B cell (primary cell): ENCODE measurements at regions of chr1 and their contacts with region 1.

Region 1: DNA sequence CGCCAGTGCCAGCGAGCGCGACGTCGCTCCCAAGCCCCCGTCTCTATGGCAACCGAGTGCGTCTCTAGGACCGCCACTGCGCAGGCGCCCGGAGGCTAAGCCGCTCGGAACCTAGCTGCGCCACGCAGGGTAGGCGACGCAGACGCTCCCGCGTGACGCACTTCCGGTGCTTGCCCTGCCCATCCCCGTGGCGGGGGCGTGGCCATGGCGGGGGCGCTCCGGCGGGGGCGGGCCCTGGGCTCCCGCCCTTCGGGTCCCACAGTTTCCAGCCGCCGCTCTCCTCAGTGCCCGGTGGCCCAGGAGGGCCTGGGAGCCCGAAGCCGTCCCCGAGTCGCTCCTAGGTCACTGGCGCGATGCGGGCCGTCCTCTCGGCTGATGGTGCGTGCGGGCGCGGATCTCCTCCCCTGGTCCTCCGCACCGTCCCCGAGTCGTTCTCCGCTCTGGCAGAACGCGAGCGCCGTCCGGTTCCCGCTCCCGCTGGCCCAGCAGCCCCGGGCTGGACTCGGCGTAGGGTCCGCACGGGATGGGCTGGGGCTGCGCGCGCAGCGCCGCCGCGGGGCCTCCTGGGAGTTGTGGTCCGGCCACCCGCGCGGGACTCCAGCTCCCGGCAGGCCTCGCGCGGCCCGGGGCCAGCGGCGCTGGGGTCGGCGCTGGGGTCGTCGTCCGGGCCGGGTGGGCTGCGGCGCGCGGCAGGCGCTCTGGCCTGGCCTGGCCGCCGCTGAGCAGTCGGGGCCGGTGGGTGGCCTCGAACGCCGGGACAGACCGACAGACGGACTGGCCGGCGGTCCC is at the start of gene MIB2:
- DNase-seq: peak; percentile 98
- ATAC-seq: peak; percentile 90
- H3K4me3 ChIP-seq: peak within 1 kb of the TSS; percentile 36 to 98 (median 97)
- H3K4me3 Mint-ChIP-seq: peak within 1 kb of the TSS; percentile 89
- H3K27ac ChIP-seq: peak within 1 kb of the TSS; percentile 100
- H3K27ac Mint-ChIP-seq: peak within 1 kb of the TSS; percentile 92
- H3K4me1 ChIP-seq: peaks cover 20% of the 10 kb centered on the region in 2 donors
- H3K4me1 Mint-ChIP-seq: peaks cover 26% of the 10 kb centered on the region
- H3K27me3 ChIP-seq: no peaks in the 10 kb centered on the region
- H3K27me3 Mint-ChIP-seq: no peaks in the 10 kb centered on the region
- CTCF ChIP-seq: no peak
- total RNA-seq, gene MIB2: 95.9 and 98.1 TPM in 2 replicates

Region 2: GRCh38 chr1:1374929-1375662 is 240.4 kb before region 1 on chr1 and contains the start of gene AURKAIP1:
- CTCF ChIA-PET with region 1: no interaction called
- POLR2A ChIA-PET with region 1: no interaction called
- intact Hi-C with region 1: loop called (anchors 1 kb)
- DNase-seq: peak; percentile 100
- ATAC-seq: peak; percentile 89
- H3K4me3 ChIP-seq: peak within 1 kb of the TSS; percentile 61 to 93 (median 78)
- H3K4me3 Mint-ChIP-seq: peak within 1 kb of the TSS; percentile 84
- H3K27ac ChIP-seq: peak within 1 kb of the TSS; percentile 75 to 95
- H3K27ac Mint-ChIP-seq: peak within 1 kb of the TSS; percentile 89
- H3K4me1 ChIP-seq: peaks cover 19 to 37% of the 10 kb centered on the region in 2 donors
- H3K4me1 Mint-ChIP-seq: peaks cover 11% of the 10 kb centered on the region
- H3K27me3 ChIP-seq: no peaks in the 10 kb centered on the region
- H3K27me3 Mint-ChIP-seq: no peaks in the 10 kb centered on the region
- CTCF ChIP-seq: peak; percentile 39
- total RNA-seq, gene AURKAIP1: 61.7 and 67.0 TPM in 2 replicates

Region 3: GRCh38 chr1:1511533-1512285 is 103.7 kb before region 1 on chr1 and contains the start of gene ATAD3A:
- CTCF ChIA-PET with region 1: no interaction called
- POLR2A ChIA-PET with region 1: no interaction called
- intact Hi-C with region 1: loop called (anchors 1 kb)
- DNase-seq: peak; percentile 97
- ATAC-seq: peak; percentile 94
- H3K4me3 ChIP-seq: peak within 1 kb of the TSS; percentile 47 to 92 (median 87)
- H3K4me3 Mint-ChIP-seq: peak within 1 kb of the TSS; percentile 95
- H3K27ac ChIP-seq: peak within 1 kb of the TSS; percentile 90 to 94
- H3K27ac Mint-ChIP-seq: peak within 1 kb of the TSS; percentile 94
- H3K4me1 ChIP-seq: peaks cover 6 to 10% of the 10 kb centered on the region in 2 donors
- H3K4me1 Mint-ChIP-seq: peaks cover 13% of the 10 kb centered on the region
- H3K27me3 ChIP-seq: no peaks in the 10 kb centered on the region
- H3K27me3 Mint-ChIP-seq: no peaks in the 10 kb centered on the region
- CTCF ChIP-seq: no peak
- total RNA-seq, gene ATAD3A: 17.5 and 22.9 TPM in 2 replicates

Region 4: GRCh38 chr1:1603671-1604373 is 11.6 kb before region 1 on chr1:
- CTCF ChIA-PET with region 1: interaction called, 3 read pairs
- POLR2A ChIA-PET with region 1: interaction called, 10 read pairs
- intact Hi-C with region 1: no loop called
- DNase-seq: peak; percentile 10
- ATAC-seq: no peak
- H3K4me3 ChIP-seq: no peak overlapping the region
- H3K4me3 Mint-ChIP-seq: no peak overlapping the region
- H3K27ac ChIP-seq: no peak overlapping the region
- H3K27ac Mint-ChIP-seq: no peak overlapping the region
- H3K4me1 ChIP-seq: peaks cover 27 to 37% of the 10 kb centered on the region in 2 donors
- H3K4me1 Mint-ChIP-seq: peaks cover 31% of the 10 kb centered on the region
- H3K27me3 ChIP-seq: peaks cover 0 to 17% (median 3%) of the 10 kb centered on the region in 4 experiments
- H3K27me3 Mint-ChIP-seq: peaks cover 3% of the 10 kb centered on the region
- CTCF ChIP-seq: no peak

Region 5: GRCh38 chr1:1815606-1816281 is 200.3 kb after region 1 on chr1:
- CTCF ChIA-PET with region 1: no interaction called
- POLR2A ChIA-PET with region 1: no interaction called
- intact Hi-C with region 1: no loop called
- DNase-seq: no peak
- ATAC-seq: no peak
- H3K4me3 ChIP-seq: no peak overlapping the region
- H3K4me3 Mint-ChIP-seq: no peak overlapping the region
- H3K27ac ChIP-seq: no peak overlapping the region
- H3K27ac Mint-ChIP-seq: peak overlapping the region; percentile 34
- H3K4me1 ChIP-seq: peaks cover 0 to 3% of the 10 kb centered on the region in 2 donors
- H3K4me1 Mint-ChIP-seq: peaks cover 5% of the 10 kb centered on the region
- H3K27me3 ChIP-seq: no peaks in the 10 kb centered on the region
- H3K27me3 Mint-ChIP-seq: no peaks in the 10 kb centered on the region
- CTCF ChIP-seq: no peak

Region 6: DNA sequence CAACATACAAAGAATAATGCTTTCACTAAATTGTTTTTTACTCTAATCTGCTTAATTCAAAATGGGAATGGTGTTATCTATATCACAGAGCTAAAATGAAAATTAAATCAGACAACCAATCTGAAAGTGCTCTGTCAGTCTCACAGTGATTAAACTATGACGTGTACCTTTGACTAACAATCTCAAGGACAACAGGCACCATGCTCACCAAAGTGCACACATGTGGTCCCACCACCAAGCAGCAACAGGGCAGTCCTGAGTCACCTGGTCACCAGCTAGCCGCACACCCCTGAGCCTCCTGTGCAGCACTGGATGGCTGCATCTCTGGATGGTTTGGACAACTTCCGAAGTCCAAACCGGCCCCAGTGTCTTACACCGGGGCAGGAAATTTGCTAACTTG is 217.4 kb after region 1 on chr1:
- CTCF ChIA-PET with region 1: no interaction called
- POLR2A ChIA-PET with region 1: no interaction called
- intact Hi-C with region 1: no loop called
- DNase-seq: no peak
- ATAC-seq: no peak
- H3K4me3 ChIP-seq: no peak overlapping the region
- H3K4me3 Mint-ChIP-seq: peak overlapping the region; percentile 78
- H3K27ac ChIP-seq: peak overlapping the region in 1 of 2 donors; percentile 90
- H3K27ac Mint-ChIP-seq: peak overlapping the region; percentile 87
- H3K4me1 ChIP-seq: peaks cover 45 to 49% of the 10 kb centered on the region in 2 donors
- H3K4me1 Mint-ChIP-seq: peaks cover 53% of the 10 kb centered on the region
- H3K27me3 ChIP-seq: no peaks in the 10 kb centered on the region
- H3K27me3 Mint-ChIP-seq: no peaks in the 10 kb centered on the region
- CTCF ChIP-seq: no peak

Region 7: GRCh38 chr1:1890506-1891348 is 275.3 kb after region 1 on chr1 and contains the start of gene GNB1:
- CTCF ChIA-PET with region 1: no interaction called
- POLR2A ChIA-PET with region 1: interaction called, 4 read pairs
- intact Hi-C with region 1: loop called (anchors 1 kb)
- DNase-seq: peak; percentile 98
- ATAC-seq: peak; percentile 60
- H3K4me3 ChIP-seq: peak within 1 kb of the TSS; percentile 63 to 88 (median 79)
- H3K4me3 Mint-ChIP-seq: peak within 1 kb of the TSS; percentile 91
- H3K27ac ChIP-seq: peak within 1 kb of the TSS; percentile 72 to 86
- H3K27ac Mint-ChIP-seq: peak within 1 kb of the TSS; percentile 96
- H3K4me1 ChIP-seq: peaks cover 53 to 74% of the 10 kb centered on the region in 2 donors
- H3K4me1 Mint-ChIP-seq: peaks cover 60% of the 10 kb centered on the region
- H3K27me3 ChIP-seq: no peaks in the 10 kb centered on the region
- H3K27me3 Mint-ChIP-seq: no peaks in the 10 kb centered on the region
- CTCF ChIP-seq: no peak
- total RNA-seq, gene GNB1: 249 and 291 TPM in 2 replicates